Sigmoid colon (tissue), 7 donors: ENCODE measurements at regions of chr17 and their contacts with region 1.

Region 1: DNA sequence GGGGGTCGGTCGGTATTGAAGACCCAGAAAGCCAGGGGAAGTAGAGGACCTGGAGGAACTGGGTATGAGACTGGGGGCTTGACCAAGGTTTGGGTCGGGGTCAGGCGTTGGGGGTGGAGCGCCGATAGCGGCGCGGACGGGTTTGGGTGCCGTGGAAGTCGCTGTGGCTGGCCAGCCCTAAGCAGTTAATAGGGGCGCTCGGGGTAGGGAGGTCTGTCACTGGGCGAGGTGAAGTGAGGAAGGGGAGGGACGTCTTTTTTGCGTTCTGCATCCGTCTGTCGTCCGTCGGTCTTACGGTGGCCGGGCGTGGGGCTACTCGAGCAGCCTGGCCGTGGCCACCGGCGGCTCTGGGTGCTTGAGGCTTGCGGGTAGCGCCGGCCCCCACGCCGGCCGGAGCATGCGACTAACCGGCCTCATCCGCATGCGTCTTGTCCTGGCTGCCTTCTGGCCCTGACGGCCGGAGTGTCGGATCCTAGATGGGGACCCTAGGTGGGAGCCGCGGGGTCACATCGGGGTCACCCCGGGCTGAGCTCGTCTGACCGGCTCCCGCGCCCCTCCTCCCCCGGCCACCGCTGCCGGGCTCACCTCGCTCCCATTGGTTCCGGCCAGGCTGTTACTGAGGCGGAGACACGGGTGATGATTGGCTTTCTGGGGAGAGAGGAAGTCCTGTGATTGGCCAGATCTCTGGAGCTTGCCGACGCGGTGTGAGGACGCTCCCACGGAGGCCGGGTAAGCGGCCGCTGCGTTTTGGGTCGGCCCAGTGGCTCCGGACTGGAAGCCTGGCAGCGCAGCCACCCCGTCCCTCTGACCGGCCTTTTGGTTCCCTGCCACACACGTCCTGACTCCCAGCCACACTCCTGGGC is 10.3 kb upstream of the TMEM88 start:
- DNase-seq: peak; percentile 97
- H3K4me3 ChIP-seq: peak overlapping the region; percentile 61 to 85 (median 73)
- H3K27ac ChIP-seq: peak overlapping the region; percentile 96 to 100 (median 98)
- H3K4me1 ChIP-seq: peaks cover 0 to 58% (median 40%) of the 10 kb centered on the region in 4 donors
- H3K27me3 ChIP-seq: no peaks in the 10 kb centered on the region
- CTCF ChIP-seq: no peak
- EP300 ChIP-seq: no peak
- POLR2A ChIP-seq: peak; percentile 64 to 78

Region 2: DNA sequence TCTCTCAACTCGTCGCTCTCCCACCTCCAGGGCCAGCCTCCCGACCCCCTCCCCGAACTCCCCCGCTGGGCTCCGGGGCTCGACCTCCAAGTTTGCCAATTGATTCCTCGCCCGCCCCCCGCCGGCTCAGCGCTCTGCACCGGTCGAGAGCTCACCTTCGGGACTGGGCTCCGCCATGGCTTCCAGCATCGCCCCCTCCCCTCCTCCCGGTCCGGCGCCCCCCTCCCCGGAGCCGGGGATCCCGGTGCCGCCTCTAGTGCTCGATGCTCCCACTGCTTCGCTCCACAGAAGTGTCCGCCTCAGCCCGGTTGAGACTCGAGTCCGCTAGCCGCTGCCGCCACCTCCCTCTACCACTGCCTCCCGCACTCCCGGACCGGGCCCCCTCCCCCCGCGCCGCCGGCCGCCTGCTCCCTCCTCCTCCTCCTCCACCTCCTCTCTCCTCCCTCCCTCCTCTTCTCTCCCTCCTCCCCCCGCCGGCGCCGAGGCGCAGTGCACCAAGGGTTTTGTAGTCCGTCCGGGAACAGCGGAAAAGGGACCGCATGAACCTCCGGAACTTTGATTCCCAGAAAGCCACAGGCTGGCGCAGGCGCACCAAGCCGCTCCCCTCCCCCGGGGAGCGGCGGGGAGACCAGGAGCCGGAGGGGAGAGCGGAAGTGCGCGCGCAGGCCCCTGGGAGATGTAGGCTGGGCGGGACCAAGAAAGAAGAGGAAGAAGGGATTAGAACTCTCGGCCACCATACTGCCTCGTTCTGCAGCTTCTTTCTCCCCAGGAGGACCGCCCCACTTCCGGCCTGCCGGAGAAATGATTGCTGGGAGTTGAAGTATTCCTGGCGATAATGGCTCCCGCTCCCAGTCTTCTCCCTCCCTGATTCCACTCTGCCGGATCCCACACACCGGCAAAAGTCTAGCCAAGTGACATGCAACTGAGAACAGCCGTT is 605.2 kb before region 1 on chr17 and contains the start of gene PHF23:
- intact Hi-C with region 1: loop called (anchors 5 kb)
- DNase-seq: peak; percentile 100
- H3K4me3 ChIP-seq: peak within 1 kb of the TSS; percentile 95 to 100 (median 100)
- H3K27ac ChIP-seq: peak within 1 kb of the TSS; percentile 98 to 100 (median 99)
- H3K4me1 ChIP-seq: peaks cover 0 to 55% (median 54%) of the 10 kb centered on the region in 4 donors
- H3K27me3 ChIP-seq: no peaks in the 10 kb centered on the region
- CTCF ChIP-seq: no peak
- EP300 ChIP-seq: peak in 1 of 4 donors; percentile 62
- POLR2A ChIP-seq: peak; percentile 61 to 84
- total RNA-seq, gene PHF23: 23.1 to 45.4 (median 35.4) TPM

Region 3: DNA sequence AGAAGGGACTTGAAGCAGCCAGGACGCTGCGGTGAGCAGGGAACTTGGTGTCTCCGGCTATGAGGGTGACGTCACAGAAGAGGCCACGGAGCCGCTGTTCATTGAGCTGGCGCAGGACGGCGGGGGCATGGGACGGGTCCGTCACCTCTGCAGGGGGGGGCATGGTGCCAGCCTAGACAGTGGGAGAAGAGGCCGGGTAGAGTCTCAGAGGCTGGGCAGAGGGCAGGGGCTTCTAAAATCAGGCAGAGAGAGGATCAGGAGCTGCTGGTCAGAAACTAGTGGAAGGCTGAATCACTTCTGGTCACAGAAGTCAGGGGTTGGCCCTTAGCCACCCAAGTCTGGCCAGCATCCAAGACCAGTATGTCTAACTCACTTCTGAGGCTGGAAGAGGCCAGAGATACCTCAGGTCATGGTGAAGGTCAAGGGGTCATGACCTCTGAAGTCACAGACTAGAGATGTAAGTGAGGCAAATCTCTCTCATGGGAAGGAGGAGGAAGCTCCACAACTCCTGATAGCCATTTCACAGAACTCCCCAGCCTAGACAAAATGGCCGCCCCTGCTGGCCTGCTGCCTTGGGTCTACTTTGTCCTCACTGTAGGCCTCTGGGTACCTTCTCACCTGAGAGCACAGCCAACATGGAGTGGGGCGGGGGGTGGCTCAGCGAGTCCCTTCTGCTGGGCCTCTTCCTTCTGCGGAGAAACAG is 377.7 kb before region 1 on chr17:
- intact Hi-C with region 1: no loop called
- DNase-seq: peak; percentile 88
- H3K4me3 ChIP-seq: no peak overlapping the region
- H3K27ac ChIP-seq: peak overlapping the region; percentile 46 to 59 (median 50)
- H3K4me1 ChIP-seq: peaks cover 0 to 58% (median 33%) of the 10 kb centered on the region in 4 donors
- H3K27me3 ChIP-seq: no peaks in the 10 kb centered on the region
- CTCF ChIP-seq: no peak
- EP300 ChIP-seq: no peak
- POLR2A ChIP-seq: no peak

Region 4: GRCh38 chr17:8156246-8156992 is 311.9 kb after region 1 on chr17:
- intact Hi-C with region 1: loop called (anchors 5 kb)
- DNase-seq: peak; percentile 100
- H3K4me3 ChIP-seq: peak overlapping the region; percentile 93 to 97 (median 96)
- H3K27ac ChIP-seq: peak overlapping the region; percentile 99 to 100 (median 100)
- H3K4me1 ChIP-seq: peaks cover 0 to 58% (median 54%) of the 10 kb centered on the region in 4 donors
- H3K27me3 ChIP-seq: no peaks in the 10 kb centered on the region
- CTCF ChIP-seq: no peak
- EP300 ChIP-seq: peak; percentile 59 to 98 (median 77)
- POLR2A ChIP-seq: peak; percentile 100